Tibial artery (tissue), 4 donors: ENCODE measurements at regions of chr10 and their contacts with region 1.

Region 1: DNA sequence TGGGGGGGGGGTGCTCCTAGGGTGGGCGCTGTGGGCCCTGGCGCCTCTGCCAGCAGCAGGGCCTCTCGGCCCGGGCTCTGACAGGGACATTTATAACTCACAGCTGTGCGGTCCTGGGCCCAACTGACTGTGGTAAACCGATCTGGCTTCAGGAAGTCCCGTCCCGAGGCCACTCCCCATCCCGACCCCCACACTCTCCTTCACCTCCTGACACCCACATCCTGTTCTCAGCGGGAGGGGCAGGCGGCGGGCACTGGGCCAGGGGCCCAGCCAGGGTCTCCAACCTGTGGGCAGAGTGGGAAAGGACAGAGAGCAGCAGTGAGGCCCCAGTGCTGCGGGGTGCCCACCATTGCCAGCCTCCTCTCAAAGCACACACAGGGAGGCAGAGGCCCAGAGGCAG is 69.1 kb downstream of the ZMIZ1 start:
- DNase-seq: no peak
- H3K4me3 ChIP-seq: no peak overlapping the region
- H3K27ac ChIP-seq: peak overlapping the region; percentile 68 to 76
- H3K4me1 ChIP-seq: peaks cover 3 to 50% (median 31%) of the 10 kb centered on the region in 4 donors
- H3K27me3 ChIP-seq: no peaks in the 10 kb centered on the region
- CTCF ChIP-seq: no peak

Region 2: DNA sequence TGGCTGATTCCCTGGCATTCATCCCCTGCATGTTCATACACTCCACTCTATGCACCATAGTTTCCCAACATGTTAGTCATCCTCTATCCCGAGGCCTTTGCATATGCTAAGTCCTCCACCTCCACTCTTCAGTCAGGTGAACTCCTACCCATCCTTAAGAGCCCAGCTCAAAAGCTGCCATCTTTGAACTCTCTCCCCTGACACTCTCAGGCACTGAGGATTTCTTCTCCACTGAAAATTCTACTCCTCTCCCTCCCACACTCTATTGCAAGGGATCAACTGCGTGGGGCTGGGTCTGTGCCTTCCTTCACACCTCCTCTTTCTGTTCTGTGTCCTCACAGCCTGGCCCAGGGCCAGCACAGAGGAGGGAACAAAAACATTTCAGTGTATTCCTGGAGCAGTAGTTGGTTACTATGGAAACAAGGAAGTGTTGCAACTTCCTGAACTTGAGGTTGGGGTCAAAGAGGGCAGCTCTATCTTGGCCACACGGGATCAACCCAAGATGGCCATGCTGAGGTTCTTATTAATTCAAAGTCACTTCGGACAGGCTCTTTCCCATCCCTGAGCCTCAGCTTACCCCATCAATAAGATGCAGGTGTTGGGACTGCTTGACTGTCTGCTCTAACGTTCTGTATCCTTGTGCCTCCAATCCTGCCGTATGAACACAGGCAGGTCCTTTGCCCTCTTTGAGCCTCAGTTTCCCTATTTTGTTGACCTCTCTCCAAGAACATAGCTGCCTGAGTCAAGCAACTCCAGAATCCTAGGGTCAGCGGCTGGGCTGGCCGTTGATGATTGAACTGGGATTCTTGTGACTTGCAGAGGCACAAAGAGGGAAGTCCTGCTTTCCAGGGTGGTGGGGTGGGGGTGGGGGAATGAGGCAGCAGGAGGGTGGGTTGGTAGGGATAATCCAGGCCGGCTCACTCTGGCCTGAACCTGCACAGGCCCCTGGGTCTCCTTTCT is 53.5 kb before region 1 on chr10:
- intact Hi-C with region 1: loop called (anchors 10 kb)
- DNase-seq: peak; percentile 95 to 98
- H3K4me3 ChIP-seq: no peak overlapping the region
- H3K27ac ChIP-seq: peak overlapping the region; percentile 27 to 65
- H3K4me1 ChIP-seq: peaks cover 15 to 83% (median 73%) of the 10 kb centered on the region in 4 donors
- H3K27me3 ChIP-seq: no peaks in the 10 kb centered on the region
- CTCF ChIP-seq: no peak